ENCODE measurements at regions of chr19 and their contacts with region 1.

Region 1: DNA sequence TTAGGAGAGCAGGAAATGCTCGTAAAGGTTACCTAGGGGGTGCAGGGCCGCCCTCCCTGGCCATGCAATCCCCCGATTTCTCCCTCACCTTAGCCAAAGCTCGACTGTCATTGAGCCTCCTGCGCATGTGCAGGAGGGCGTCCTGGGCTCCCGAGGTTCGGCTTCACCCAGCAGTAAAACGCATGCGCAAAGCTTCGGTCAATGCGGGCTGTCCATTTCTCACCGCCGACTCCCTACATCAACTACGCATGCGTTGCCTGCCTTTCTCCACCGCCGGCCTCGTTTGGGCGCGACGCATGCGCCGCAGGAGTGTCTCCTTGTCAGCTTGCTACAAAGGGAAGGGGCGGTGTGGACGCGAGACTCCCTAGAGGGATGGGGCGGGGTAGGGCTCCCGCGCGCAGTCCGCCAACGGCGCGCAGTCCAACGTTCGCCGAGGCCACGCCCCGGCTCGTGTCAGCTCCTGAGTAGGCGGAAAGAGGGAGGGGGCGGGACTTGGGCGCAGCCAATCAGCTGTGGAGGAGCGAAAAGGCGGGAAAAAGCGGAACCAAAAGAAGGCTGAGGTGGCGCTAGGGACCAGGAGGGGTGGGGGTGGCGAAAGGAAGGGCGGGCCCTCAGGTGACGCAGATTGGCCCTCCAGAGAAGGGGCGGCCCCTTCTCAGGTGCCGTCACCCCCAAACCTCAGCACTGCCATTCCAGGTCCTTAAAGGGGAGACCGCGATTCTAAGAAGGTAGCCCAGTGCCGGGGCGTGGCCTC is at the starts of genes SYNGR4 and TMEM143:
- DNase-seq: peak; percentile 99
- H3K4me3 Mint-ChIP-seq: peak within 1 kb of the TSS; percentile 84
- H3K27ac Mint-ChIP-seq: peak within 1 kb of the TSS; percentile 97
- H3K4me1 Mint-ChIP-seq: no peaks in the 10 kb centered on the region
- H3K27me3 Mint-ChIP-seq: no peaks in the 10 kb centered on the region
- CTCF ChIP-seq: no peak
- total RNA-seq, gene SYNGR4: not detected in 2 replicates
- total RNA-seq, gene TMEM143: 10.4 and 14.8 TPM in 2 replicates

Region 2: DNA sequence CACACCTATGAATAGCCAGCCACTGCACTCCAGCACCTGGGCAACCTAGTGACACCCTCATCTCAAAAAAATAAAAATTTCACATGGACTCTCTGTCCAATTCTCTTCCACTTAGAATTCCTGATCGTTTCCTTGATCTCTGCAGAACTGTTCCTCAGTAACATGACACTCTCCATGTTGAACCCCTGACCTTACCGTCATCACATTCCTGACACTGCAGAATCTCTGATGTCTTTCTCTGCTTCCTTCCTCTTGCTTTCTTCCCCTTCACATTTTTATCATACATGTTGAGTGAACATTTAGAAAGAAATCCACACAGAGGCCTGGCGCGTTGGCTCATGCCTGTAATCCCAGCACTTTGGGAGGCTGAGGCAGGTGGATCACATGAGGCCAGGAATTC is 79.1 kb before region 1 on chr19:
- CTCF ChIA-PET with region 1: no interaction called
- intact Hi-C with region 1: no loop called
- DNase-seq: no peak
- H3K4me3 Mint-ChIP-seq: no peak overlapping the region
- H3K27ac Mint-ChIP-seq: no peak overlapping the region
- H3K4me1 Mint-ChIP-seq: no peaks in the 10 kb centered on the region
- H3K27me3 Mint-ChIP-seq: peaks cover 11% of the 10 kb centered on the region
- CTCF ChIP-seq: no peak

Region 3: GRCh38 chr19:48351341-48351752 is 12.6 kb before region 1 on chr19:
- CTCF ChIA-PET with region 1: interaction called, 14 read pairs
- intact Hi-C with region 1: no loop called
- DNase-seq: peak; percentile 80
- H3K4me3 Mint-ChIP-seq: no peak overlapping the region
- H3K27ac Mint-ChIP-seq: no peak overlapping the region
- H3K4me1 Mint-ChIP-seq: peaks cover 15% of the 10 kb centered on the region
- H3K27me3 Mint-ChIP-seq: no peaks in the 10 kb centered on the region
- CTCF ChIP-seq: peak; percentile 76

Region 4: GRCh38 chr19:48391107-48391986 is 27.4 kb after region 1 on chr19 and contains the start of gene KDELR1:
- CTCF ChIA-PET with region 1: interaction called, 22 read pairs
- intact Hi-C with region 1: no loop called
- DNase-seq: peak; percentile 87
- H3K4me3 Mint-ChIP-seq: peak within 1 kb of the TSS; percentile 82
- H3K27ac Mint-ChIP-seq: peak within 1 kb of the TSS; percentile 89
- H3K4me1 Mint-ChIP-seq: peaks cover 9% of the 10 kb centered on the region
- H3K27me3 Mint-ChIP-seq: peaks cover 51% of the 10 kb centered on the region
- CTCF ChIP-seq: peak; percentile 95
- total RNA-seq, gene KDELR1: 185 and 194 TPM in 2 replicates

Region 5: GRCh38 chr19:48419158-48419920 is 55.4 kb after region 1 on chr19:
- CTCF ChIA-PET with region 1: no interaction called
- intact Hi-C with region 1: no loop called
- DNase-seq: no peak
- H3K4me3 Mint-ChIP-seq: no peak overlapping the region
- H3K27ac Mint-ChIP-seq: no peak overlapping the region
- H3K4me1 Mint-ChIP-seq: peaks cover 9% of the 10 kb centered on the region
- H3K27me3 Mint-ChIP-seq: peaks cover 25% of the 10 kb centered on the region
- CTCF ChIP-seq: no peak